Cardiac septum (tissue), 1 donor: ENCODE measurements at regions of chr3 and their contacts with region 1.

Region 1: DNA sequence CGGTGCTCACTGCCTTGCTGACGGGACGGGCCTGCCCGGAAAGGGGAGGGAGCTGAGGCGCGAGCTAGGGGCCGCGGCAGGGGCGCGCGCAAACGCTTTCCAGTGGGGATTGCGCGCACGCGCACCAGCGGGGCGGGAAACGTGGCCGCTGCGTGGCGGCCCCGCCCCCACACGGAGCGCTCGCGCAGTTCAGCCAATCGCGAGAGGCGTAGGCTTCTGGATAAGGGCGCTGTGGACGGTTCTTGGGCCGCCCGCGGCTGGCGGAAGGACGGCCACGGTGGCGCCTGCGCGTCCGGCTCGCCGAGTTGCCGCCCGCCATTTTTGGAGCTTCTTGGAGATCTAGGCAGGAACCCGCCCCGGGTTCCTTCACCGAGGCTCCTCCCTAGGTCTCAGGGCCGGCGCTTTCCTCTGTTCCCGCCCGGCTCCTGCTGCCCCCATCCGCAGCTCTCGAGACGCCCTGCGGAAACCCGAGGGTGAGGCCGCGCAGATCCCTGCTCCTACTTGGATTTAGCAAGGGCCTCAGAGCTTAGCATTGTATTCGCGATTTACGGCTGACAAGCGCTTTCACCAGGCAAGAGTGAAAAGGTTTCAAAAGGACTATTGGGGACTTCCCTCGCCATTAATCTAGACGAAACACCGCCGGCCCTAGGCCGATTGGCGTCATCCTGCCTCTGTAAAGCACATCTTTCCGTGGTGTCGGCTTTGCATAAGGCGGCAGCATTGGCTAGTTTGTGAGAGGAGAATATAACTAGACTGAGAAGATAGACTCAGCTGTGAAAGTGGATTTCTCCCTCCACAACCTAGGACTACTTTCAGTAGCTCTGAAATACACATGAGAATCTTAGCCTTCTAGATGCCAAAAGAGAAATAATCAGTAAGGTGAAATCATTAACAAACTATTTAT is 496 bp upstream of the STAG1 start:
- DNase-seq: peak; percentile 99

Region 2: GRCh38 chr3:136196401-136197158 is 556.1 kb before region 1 on chr3:
- intact Hi-C with region 1: loop called (anchors 1 kb)
- DNase-seq: peak; percentile 99

Region 3: GRCh38 chr3:136366289-136366688 is 386.4 kb before region 1 on chr3:
- intact Hi-C with region 1: no loop called
- DNase-seq: no peak

Region 4: GRCh38 chr3:136390574-136390973 is 362.1 kb before region 1 on chr3:
- intact Hi-C with region 1: loop called (anchors 1 kb)
- DNase-seq: no peak

Region 5: GRCh38 chr3:136720095-136720494 is 32.6 kb before region 1 on chr3:
- intact Hi-C with region 1: no loop called
- DNase-seq: no peak

Region 6: GRCh38 chr3:136730595-136731273 is 21.9 kb before region 1 on chr3:
- intact Hi-C with region 1: no loop called
- DNase-seq: no peak

Region 7: GRCh38 chr3:136818769-136819391 is 66.2 kb after region 1 on chr3 and contains the start of gene SLC35G2:
- intact Hi-C with region 1: loop called (anchors 5 kb)
- DNase-seq: peak; percentile 82
- total RNA-seq, gene SLC35G2: 4.7 TPM

Region 8: GRCh38 chr3:136994772-136995516 is 242.3 kb after region 1 on chr3:
- intact Hi-C with region 1: loop called (anchors 5 kb)
- DNase-seq: peak; percentile 84

Region 9: GRCh38 chr3:137110484-137110883 is 357.8 kb after region 1 on chr3:
- intact Hi-C with region 1: no loop called
- DNase-seq: no peak